Activated CD4-positive, alpha-beta memory T cell treated with anti-CD3 and anti-CD28 coated beads, Interleukin-2, amount 10 ng/mL, durations not matched to agents 7 days and 5 days (primary cell): ENCODE measurements at regions of chr10 and their contacts with region 1.

Region 1: DNA sequence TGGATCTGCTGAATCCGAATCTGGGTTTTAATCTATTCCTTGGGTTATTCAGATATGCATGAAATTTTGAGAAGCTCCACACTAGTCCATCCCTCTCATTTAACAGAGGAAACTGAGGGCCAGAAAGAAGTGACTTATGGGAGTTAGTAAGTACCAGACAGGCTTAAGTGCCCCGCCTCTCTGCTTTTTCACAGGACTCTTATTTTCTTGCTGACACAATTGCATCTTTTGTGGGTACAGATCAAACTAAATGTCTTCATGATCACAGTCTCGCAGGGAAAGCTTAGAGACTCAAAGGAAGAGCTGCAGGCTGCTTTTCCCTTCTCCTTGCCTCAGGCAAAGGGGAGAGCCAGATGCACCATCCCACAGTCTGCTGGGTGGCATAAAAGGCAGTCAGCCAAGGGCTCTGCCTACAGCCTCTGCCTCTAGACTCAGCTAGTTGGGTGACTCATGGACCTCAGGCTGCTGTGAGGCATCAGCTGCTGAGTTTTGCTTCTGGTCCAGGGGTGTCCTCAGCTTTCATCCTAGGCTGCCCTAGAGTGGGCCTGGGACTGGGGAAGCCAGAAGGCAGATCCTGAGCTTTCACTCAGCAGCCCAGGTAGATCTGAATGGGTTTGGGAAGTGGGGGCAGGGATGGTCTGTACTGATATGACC is 11.6 kb downstream of the GOLGA7B start:
- DNase-seq: no peak
- H3K4me3 Mint-ChIP-seq: no peak overlapping the region
- H3K27ac Mint-ChIP-seq: no peak overlapping the region
- H3K4me1 Mint-ChIP-seq: peaks cover 37% of the 10 kb centered on the region
- H3K27me3 Mint-ChIP-seq: no peaks in the 10 kb centered on the region

Region 2: GRCh38 chr10:97762816-97763215 is 98.4 kb before region 1 on chr10:
- CTCF ChIA-PET with region 1: no interaction called
- POLR2A ChIA-PET with region 1: no interaction called
- DNase-seq: no peak
- H3K4me3 Mint-ChIP-seq: no peak overlapping the region
- H3K27ac Mint-ChIP-seq: no peak overlapping the region
- H3K4me1 Mint-ChIP-seq: no peaks in the 10 kb centered on the region
- H3K27me3 Mint-ChIP-seq: no peaks in the 10 kb centered on the region

Region 3: DNA sequence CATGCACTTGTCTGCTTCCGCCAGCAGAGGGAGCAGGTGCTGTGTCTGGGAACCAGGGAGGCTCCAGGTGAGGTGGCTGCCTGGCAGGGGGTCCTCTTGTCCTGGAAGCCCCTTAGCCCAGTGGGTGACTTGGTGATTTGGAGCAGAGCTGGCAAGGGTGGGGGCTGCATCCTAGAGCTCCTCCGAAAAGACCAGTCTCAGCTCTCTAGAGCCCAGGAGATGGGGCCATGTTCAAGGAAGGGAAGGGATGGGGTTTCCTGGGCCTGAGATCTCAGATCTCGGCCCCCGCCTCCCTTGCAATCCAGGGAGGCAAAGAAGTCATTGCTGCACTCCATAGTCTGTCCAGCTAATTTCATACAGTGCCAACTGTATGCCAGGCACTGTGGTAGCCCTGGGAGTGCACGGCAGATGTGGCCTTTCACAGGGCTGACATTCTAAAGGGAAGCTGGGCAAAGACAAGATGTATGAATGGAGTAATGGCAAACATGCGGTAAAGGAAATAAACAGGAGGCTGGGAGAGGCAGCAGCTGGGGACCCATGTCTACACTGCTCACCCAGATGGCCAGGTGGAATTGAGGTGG is 69.0 kb before region 1 on chr10:
- CTCF ChIA-PET with region 1: interaction called, 20 read pairs
- POLR2A ChIA-PET with region 1: interaction called, 4 read pairs
- DNase-seq: peak; percentile 78
- H3K4me3 Mint-ChIP-seq: no peak overlapping the region
- H3K27ac Mint-ChIP-seq: peak overlapping the region; percentile 24
- H3K4me1 Mint-ChIP-seq: peaks cover 33% of the 10 kb centered on the region
- H3K27me3 Mint-ChIP-seq: peaks cover 12% of the 10 kb centered on the region

Region 4: GRCh38 chr10:97822261-97822687 is 39.0 kb before region 1 on chr10:
- CTCF ChIA-PET with region 1: no interaction called
- POLR2A ChIA-PET with region 1: no interaction called
- DNase-seq: no peak
- H3K4me3 Mint-ChIP-seq: no peak overlapping the region
- H3K27ac Mint-ChIP-seq: no peak overlapping the region
- H3K4me1 Mint-ChIP-seq: peaks cover 2% of the 10 kb centered on the region
- H3K27me3 Mint-ChIP-seq: peaks cover 4% of the 10 kb centered on the region

Region 5: DNA sequence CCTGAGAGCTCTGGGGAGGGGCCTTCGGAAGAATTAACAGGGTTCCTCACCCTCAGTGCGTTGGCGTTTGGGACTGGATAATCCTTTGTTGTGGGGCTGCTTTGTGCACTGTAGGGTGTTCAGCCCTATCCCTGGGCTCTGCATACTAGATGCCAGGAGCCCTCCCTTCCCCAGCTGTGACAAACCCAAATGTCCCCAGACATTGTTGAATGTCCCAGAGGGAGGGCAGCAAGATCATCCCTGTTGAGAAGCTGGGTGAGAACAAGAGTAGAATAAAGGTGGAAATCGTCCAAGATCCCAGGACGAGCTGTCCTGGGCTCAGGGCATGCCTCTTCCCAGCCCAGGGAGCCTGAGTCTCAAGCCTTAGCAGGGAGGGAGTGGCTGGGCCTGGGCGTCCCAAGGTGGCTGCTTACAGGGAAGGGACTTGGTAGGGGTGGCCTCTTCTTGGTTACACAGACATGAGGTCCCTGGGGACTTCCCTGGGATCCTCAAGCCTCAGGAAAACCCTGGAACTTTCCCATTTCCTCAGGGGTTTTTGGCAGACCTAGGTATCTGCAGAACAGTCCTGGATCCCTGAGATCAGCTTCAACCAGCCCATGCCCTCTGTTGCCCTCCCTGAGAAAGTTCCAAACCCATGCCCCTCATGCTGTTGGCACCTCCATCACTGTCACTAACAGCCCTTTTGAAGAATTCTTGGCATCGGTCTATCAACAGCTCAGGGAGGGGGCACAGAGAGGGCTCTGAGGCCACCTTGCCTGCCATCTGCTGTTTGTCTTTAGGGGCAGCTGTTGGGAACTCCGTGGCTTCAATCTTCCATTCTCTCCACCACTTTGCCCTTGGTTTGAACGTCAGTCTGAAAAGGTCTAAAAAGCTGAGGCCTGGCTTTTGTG is 42.1 kb after region 1 on chr10:
- CTCF ChIA-PET with region 1: no interaction called
- POLR2A ChIA-PET with region 1: no interaction called
- DNase-seq: no peak
- H3K4me3 Mint-ChIP-seq: no peak overlapping the region
- H3K27ac Mint-ChIP-seq: no peak overlapping the region
- H3K4me1 Mint-ChIP-seq: no peaks in the 10 kb centered on the region
- H3K27me3 Mint-ChIP-seq: peaks cover 13% of the 10 kb centered on the region